Activated CD8-positive, alpha-beta T cell treated with anti-CD3 and anti-CD28 coated beads for 36 hours (primary cell): ENCODE measurements at regions of chr15 and their contacts with region 1.

Region 1: DNA sequence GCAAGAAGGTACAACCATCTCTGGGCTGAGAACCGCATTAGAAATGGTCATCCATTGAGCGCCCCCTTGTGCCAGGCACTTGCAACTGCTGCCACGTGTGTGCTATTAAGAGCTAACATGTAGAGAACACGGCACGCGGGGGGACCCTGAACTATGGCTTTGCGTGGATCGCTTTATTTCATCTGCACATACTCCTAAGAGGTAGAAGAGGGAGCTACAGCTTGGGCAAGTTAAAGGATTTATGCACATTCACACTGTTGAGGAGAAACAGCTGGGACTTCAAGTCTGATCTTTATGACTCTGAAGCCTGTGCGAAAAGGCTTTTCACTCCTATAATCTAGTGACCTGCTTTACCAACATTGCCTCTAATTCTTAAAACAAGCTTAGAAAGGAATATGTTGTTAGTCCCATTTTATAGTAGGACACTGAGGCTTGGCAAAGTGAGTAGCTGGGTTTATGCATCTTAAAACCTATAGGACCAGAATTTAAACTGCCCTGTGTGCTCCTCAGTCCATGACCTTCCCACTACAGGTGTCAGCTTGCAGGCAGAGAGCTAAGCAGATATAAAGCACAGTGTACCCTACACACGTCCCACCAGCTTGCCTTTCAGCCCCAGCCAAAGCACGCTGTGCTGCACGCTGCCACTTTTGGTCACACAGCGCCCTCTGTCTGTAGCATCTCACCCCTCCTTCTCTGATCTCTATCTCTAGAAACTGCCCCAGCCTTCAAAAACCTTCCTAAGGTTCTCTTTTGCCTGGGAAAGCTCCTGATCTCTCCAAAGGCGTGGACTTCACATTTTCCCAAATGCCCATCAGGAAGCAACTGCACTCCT is 57.8 kb downstream of the STARD5 start:
- DNase-seq: peak; percentile 92
- ATAC-seq: peak; percentile 83
- H3K4me3 Mint-ChIP-seq: peak overlapping the region; percentile 56
- H3K27ac Mint-ChIP-seq: peak overlapping the region; percentile 82
- H3K4me1 Mint-ChIP-seq: peaks cover 49% of the 10 kb centered on the region
- H3K27me3 Mint-ChIP-seq: peaks cover 3% of the 10 kb centered on the region
- CTCF ChIP-seq: peak; percentile 68

Region 2: GRCh38 chr15:80455668-80456442 is 810.3 kb before region 1 on chr15:
- CTCF ChIA-PET with region 1: interaction called, 23 read pairs
- POLR2A ChIA-PET with region 1: no interaction called
- intact Hi-C with region 1: no loop called
- DNase-seq: peak; percentile 63
- ATAC-seq: peak; percentile 80
- H3K4me3 Mint-ChIP-seq: no peak overlapping the region
- H3K27ac Mint-ChIP-seq: no peak overlapping the region
- H3K4me1 Mint-ChIP-seq: no peaks in the 10 kb centered on the region
- H3K27me3 Mint-ChIP-seq: peaks cover 8% of the 10 kb centered on the region
- CTCF ChIP-seq: peak; percentile 93

Region 3: DNA sequence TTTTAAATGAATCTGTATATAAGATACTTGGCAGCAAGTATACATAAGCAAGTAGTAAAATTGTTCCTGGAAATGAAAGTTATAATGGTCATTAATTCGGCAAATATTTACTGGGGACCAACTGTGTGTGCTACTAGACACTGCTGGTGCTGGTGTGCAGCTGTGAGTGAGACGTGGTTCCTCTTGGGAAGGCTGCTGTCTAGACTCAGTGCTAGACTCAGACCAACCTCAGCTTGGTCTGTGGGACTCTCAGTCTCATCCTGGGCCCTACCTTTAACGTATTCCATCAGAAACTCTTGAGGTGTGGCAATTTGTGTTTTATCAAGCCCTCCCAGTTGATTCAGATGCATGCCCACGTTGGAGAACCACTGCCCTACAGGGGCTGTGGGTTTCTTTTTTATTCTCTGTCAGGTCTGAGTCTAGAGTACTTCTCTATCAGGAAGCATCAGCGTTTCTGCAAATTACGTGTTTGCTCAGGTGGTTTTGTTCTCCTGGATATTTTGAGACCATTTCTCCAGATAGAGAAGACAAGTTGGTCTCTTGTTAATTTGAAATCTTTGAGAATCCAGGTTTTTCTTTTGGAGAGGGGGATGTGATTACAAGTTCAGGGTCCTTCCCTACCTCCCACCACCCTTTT is 258.6 kb before region 1 on chr15:
- CTCF ChIA-PET with region 1: interaction called, 36 read pairs
- POLR2A ChIA-PET with region 1: no interaction called
- intact Hi-C with region 1: no loop called
- DNase-seq: no peak
- ATAC-seq: no peak
- H3K4me3 Mint-ChIP-seq: no peak overlapping the region
- H3K27ac Mint-ChIP-seq: no peak overlapping the region
- H3K4me1 Mint-ChIP-seq: peaks cover 59% of the 10 kb centered on the region
- H3K27me3 Mint-ChIP-seq: no peaks in the 10 kb centered on the region
- CTCF ChIP-seq: no peak

Region 4: GRCh38 chr15:81117136-81117535 is 149.0 kb before region 1 on chr15:
- CTCF ChIA-PET with region 1: interaction called, 32 read pairs
- POLR2A ChIA-PET with region 1: no interaction called
- intact Hi-C with region 1: no loop called
- DNase-seq: no peak
- ATAC-seq: no peak
- H3K4me3 Mint-ChIP-seq: no peak overlapping the region
- H3K27ac Mint-ChIP-seq: no peak overlapping the region
- H3K4me1 Mint-ChIP-seq: peaks cover 5% of the 10 kb centered on the region
- H3K27me3 Mint-ChIP-seq: peaks cover 32% of the 10 kb centered on the region
- CTCF ChIP-seq: no peak

Region 5: GRCh38 chr15:81229586-81229985 is 36.6 kb before region 1 on chr15:
- CTCF ChIA-PET with region 1: interaction called, 13 read pairs
- POLR2A ChIA-PET with region 1: no interaction called
- intact Hi-C with region 1: no loop called
- DNase-seq: no peak
- ATAC-seq: no peak
- H3K4me3 Mint-ChIP-seq: no peak overlapping the region
- H3K27ac Mint-ChIP-seq: no peak overlapping the region
- H3K4me1 Mint-ChIP-seq: no peaks in the 10 kb centered on the region
- H3K27me3 Mint-ChIP-seq: no peaks in the 10 kb centered on the region
- CTCF ChIP-seq: no peak

Region 6: DNA sequence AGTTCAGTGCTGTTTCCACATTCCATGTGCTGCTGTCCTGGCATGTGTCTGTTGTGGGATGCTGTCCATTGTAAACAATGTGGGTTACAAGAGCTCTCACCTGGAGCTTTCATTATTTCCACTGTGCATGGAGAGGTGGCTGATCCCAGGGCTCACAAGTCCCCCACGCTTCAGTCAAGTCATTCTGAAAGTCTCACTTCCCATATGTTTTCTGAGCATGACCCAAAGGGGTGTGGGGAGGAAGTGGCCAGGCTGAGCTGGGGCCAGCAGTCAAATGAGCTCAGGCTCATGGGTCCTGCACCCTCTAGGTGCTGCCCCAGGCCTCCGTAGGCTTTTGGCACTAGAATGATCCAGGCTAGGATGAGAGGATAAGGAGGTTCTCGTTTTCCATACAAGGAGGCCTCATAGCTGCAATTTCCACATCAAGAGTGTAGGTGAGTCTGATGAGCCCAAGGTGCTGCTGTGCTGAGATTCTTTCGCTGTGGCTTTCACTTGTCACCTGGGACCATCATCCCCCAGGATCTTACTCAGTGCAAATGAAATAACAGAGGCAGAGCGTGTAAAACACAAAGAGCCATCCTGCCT is 35.7 kb after region 1 on chr15:
- CTCF ChIA-PET with region 1: interaction called, 41 read pairs
- POLR2A ChIA-PET with region 1: interaction called, 3 read pairs
- intact Hi-C with region 1: no loop called
- DNase-seq: peak; percentile 72
- ATAC-seq: peak; percentile 61
- H3K4me3 Mint-ChIP-seq: peak overlapping the region; percentile 98
- H3K27ac Mint-ChIP-seq: peak overlapping the region; percentile 98
- H3K4me1 Mint-ChIP-seq: peaks cover 56% of the 10 kb centered on the region
- H3K27me3 Mint-ChIP-seq: no peaks in the 10 kb centered on the region
- CTCF ChIP-seq: no peak

Region 7: DNA sequence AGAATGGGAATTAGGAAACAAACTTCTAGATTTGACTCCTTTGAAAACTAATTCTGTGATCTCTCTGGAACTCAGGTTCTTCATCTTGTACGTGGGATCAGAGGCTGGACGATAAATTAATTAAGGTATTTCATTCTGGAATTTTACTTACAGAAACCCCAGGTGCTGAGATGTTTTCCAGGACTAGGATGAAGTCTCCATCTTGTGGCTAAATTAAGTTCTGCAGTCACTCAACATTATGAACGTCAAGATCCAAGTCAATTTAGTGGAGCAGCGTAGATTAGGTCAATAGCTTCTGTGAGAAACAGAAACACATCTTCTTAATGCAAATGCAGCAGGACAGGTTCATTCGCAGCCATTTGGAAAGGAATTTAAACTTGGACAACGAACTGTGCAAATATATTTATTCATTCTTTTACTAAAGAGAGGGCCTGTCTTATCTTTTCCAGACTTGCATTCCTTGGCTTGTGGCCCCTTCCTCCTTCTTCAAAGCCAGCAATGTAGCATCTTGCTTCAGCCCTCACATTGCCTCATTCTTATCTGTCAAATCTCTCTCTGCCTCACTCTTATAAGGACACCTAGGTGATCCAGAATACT is 134.6 kb after region 1 on chr15:
- CTCF ChIA-PET with region 1: interaction called, 97 read pairs
- POLR2A ChIA-PET with region 1: no interaction called
- intact Hi-C with region 1: no loop called
- DNase-seq: no peak
- ATAC-seq: no peak
- H3K4me3 Mint-ChIP-seq: no peak overlapping the region
- H3K27ac Mint-ChIP-seq: no peak overlapping the region
- H3K4me1 Mint-ChIP-seq: peaks cover 3% of the 10 kb centered on the region
- H3K27me3 Mint-ChIP-seq: no peaks in the 10 kb centered on the region
- CTCF ChIP-seq: peak; percentile 82

Region 8: DNA sequence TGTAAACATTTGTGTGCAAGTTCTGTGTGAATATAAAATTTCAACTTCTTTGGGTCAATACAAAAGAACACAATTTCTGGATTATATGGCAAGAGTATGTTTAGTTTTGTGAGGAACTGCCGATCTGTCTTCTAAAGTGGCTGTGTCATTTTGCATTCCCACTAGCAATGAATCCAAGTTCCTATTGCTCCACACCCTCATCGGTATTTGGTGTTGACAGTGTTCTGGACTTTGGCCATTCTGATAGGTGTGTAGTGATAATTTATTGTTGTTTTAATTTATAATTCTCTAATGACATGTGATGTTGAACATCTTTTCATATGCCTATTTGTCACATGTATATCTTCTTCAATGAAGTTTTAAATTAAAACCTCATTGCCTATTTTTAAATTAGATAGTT is 166.0 kb after region 1 on chr15:
- CTCF ChIA-PET with region 1: no interaction called
- POLR2A ChIA-PET with region 1: no interaction called
- intact Hi-C with region 1: no loop called
- DNase-seq: no peak
- ATAC-seq: no peak
- H3K4me3 Mint-ChIP-seq: no peak overlapping the region
- H3K27ac Mint-ChIP-seq: no peak overlapping the region
- H3K4me1 Mint-ChIP-seq: no peaks in the 10 kb centered on the region
- H3K27me3 Mint-ChIP-seq: peaks cover 2% of the 10 kb centered on the region
- CTCF ChIP-seq: no peak